Heart right ventricle (tissue), 16 donors: ENCODE measurements at regions of chr6 and their contacts with region 1.

Region 1: GRCh38 chr6:13183415-13184088 is 144.8 kb downstream of the TBC1D7 start:
- DNase-seq: no peak
- ATAC-seq: no peak
- H3K4me3 ChIP-seq: no peak overlapping the region
- H3K27ac ChIP-seq: no peak overlapping the region
- H3K4me1 ChIP-seq: peaks cover 0 to 5% (median 0%) of the 10 kb centered on the region in 9 donors
- H3K27me3 ChIP-seq: no peaks in the 10 kb centered on the region
- CTCF ChIP-seq: no peak

Region 2: DNA sequence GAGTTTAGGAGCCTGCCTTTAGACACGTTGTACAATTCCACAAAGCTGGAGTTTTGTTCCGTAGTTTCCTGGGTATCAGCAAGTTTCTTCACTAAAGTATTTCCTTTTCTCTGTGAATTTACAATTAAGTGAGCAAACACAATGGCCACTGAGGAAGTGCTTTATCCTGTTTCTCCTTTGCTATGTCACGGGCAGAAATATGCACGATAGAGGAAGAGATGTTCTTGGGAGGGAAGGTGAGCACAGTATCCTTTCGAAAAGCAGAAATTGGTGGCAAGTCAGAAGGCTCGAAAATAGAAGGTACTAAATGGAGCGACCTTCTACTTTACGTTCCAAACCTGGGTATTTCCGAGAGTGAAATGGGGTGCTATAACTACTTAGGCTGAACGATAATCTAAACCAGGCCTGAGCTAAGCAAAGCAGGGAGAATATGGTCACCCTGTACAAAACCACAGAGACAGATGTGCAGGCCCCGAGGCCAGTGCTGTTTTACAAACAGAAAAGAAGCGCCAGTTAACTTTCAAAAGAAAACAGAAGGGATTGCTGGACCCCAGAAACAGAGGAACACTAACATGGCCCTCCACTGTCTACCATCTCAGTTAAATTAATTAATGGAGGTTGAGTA is 114.9 kb before region 1 on chr6:
- intact Hi-C with region 1: loop called in 1 of 10 experiments (anchors 10 kb)
- DNase-seq: no peak
- ATAC-seq: peak in 7 of 8 donors; percentile 12 to 65 (median 43)
- H3K4me3 ChIP-seq: no peak overlapping the region
- H3K27ac ChIP-seq: peak overlapping the region in 7 of 10 donors; percentile 22 to 82 (median 65)
- H3K4me1 ChIP-seq: peaks cover 2 to 66% (median 39%) of the 10 kb centered on the region in 9 donors
- H3K27me3 ChIP-seq: no peaks in the 10 kb centered on the region
- CTCF ChIP-seq: no peak